ENCODE measurements at regions of chr20 and their contacts with region 1.

Region 1: DNA sequence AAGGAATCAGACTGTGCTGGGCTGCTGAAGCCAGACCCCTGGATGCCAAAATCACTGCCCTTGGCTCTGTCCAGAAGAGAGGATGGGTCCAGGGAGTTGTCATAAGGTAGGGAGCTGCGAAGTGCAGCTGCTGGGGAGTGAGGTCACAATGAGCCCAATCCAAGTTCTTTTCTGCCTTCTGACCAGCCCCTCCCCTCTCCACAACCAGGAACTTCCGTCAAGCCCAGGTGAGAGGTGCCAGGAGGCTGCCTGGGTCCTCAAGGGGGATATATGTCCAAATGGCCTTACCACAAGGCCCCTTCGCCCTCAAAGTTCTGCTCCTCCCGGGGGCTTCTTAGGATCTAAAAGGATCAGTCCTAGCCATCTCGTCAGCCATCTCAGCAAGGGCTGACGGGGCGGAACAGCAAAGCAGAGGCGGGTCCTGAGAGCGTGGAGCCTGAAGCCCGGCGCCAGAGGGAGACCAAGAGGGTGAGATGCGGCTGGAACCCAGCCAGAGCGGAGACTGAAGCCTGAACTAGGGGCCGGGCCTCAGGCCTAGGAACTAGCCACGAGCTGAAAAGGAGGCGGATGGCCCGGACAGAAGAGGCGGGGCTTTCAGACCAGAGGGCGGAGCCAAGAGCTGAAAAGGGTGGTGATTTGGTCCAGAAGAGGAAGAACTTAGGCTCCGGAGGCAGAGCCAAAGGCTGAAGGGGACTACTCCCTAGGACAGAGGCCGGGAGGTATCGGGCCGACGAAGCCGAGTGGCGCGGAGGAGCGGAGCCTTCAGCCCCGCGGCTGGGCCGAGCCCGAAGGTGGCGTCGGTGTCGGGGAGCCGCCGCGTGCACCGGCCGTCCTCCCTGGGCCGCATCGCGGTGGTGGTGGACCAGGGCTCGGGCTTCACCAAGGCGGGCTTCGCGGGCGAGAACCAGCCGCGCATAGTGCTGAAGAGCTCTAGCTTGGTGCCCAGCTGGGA is at the start of gene ACTL10:
- DNase-seq: peak; percentile 94
- ATAC-seq: peak; percentile 68
- H3K4me3 Mint-ChIP-seq: peak within 1 kb of the TSS; percentile 89
- H3K27ac Mint-ChIP-seq: peak within 1 kb of the TSS; percentile 92
- H3K4me1 Mint-ChIP-seq: peaks cover 45% of the 10 kb centered on the region
- H3K27me3 Mint-ChIP-seq: no peaks in the 10 kb centered on the region
- total RNA-seq, gene ACTL10: 3.7 to 3.9 TPM

Region 2: GRCh38 chr20:33450867-33451266 is 215.7 kb before region 1 on chr20:
- CTCF ChIA-PET with region 1: interaction called, 26 read pairs
- DNase-seq: no peak
- ATAC-seq: no peak
- H3K4me3 Mint-ChIP-seq: no peak overlapping the region
- H3K27ac Mint-ChIP-seq: no peak overlapping the region
- H3K4me1 Mint-ChIP-seq: peaks cover 7% of the 10 kb centered on the region
- H3K27me3 Mint-ChIP-seq: no peaks in the 10 kb centered on the region

Region 3: GRCh38 chr20:33489495-33490022 is 177.0 kb before region 1 on chr20:
- CTCF ChIA-PET with region 1: interaction called, 18 read pairs
- DNase-seq: peak; percentile 99
- ATAC-seq: peak; percentile 96
- H3K4me3 Mint-ChIP-seq: peak overlapping the region; percentile 84
- H3K27ac Mint-ChIP-seq: peak overlapping the region; percentile 89
- H3K4me1 Mint-ChIP-seq: peaks cover 10% of the 10 kb centered on the region
- H3K27me3 Mint-ChIP-seq: no peaks in the 10 kb centered on the region

Region 4: DNA sequence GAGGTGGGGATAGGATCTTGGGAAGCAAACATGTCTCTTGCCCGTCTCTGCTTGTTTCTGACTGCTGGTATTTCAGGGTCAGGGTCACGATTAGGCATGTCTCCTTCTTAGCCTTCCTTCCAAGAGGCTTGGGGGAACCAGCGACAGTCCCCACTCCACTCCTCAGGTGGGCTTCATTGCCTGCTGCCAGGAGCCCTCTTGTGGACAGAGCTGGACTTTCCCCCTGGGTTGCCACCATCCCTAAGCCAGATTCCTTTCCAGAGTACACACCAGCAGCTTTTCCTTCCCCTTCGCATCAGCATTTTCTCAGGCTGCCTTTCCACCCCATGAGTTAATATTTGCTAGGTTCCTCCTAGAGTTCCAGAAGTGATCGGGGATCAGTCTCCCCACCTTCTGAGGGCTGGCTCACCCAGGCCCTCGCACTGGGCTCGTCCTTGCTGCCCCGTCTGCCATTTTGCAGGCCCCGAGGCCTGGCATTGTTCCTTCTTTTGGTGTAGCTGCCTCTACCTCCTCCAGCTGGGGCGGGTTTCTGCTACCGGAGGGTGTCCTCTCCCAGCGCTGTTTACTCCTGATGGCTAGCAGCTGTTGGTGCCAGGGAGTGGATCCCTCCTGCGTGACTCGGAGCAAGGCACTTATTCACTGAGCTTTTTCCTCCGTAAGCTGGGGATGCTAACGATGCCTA is 13.2 kb before region 1 on chr20:
- CTCF ChIA-PET with region 1: interaction called, 67 read pairs
- DNase-seq: peak; percentile 70
- ATAC-seq: peak; percentile 68
- H3K4me3 Mint-ChIP-seq: no peak overlapping the region
- H3K27ac Mint-ChIP-seq: no peak overlapping the region
- H3K4me1 Mint-ChIP-seq: peaks cover 34% of the 10 kb centered on the region
- H3K27me3 Mint-ChIP-seq: no peaks in the 10 kb centered on the region

Region 5: DNA sequence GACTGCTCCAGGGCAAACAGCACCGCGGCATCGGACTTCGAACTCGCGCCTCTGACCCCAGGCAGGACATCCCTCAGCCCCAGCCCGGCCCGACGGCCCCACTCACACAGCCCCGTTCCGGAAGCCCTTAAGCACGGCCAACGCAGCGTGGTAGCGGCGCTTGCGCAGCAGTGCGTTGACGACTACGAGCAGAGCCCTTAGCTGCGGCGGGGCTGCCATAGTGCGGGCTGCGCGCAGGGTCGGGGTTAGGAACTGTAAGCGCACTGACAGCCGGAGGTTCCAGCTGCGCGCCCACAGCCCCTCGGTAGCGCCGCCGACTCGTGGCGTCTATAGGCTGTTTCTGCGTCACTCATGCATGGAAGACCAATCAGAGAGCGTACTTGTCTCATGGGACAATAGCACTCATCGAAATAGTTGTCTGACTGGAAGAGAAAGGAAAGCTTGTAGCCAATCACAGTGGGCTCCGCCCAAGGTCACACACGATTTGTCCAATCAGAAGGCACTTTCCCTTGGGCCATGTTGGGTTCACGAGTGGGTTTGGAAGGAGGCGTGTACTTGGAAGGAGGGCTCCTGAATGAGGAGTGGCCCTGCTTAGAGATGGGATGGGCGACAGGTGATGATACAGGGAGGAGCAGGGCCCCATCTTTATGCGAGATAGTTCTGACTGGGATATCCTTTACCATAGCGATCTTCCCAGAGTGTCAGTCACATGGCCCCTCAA is 53.6 kb after region 1 on chr20 and contains the start of gene PXMP4:
- CTCF ChIA-PET with region 1: interaction called, 15 read pairs
- DNase-seq: peak; percentile 95
- ATAC-seq: peak; percentile 99
- H3K4me3 Mint-ChIP-seq: peak within 1 kb of the TSS; percentile 86
- H3K27ac Mint-ChIP-seq: peak within 1 kb of the TSS; percentile 81
- H3K4me1 Mint-ChIP-seq: peaks cover 26% of the 10 kb centered on the region
- H3K27me3 Mint-ChIP-seq: no peaks in the 10 kb centered on the region
- total RNA-seq, gene PXMP4: 11.9 to 15.6 TPM

Measured in activated CD8-positive, alpha-beta memory T cell treated with anti-CD3 and anti-CD28 coated beads, Interleukin-2, amount 10 ng/mL, durations not matched to agents 7 days and 5 days (primary cell).